Sigmoid colon (tissue), 7 donors: ENCODE measurements at regions of chr15 and their contacts with region 1.

Region 1: GRCh38 chr15:98647774-98648653 is at the start of gene IGF1R:
- DNase-seq: peak; percentile 93
- H3K4me3 ChIP-seq: peak within 1 kb of the TSS; percentile 63 to 94 (median 85)
- H3K27ac ChIP-seq: peak within 1 kb of the TSS; percentile 92 to 98 (median 96)
- H3K4me1 ChIP-seq: peaks cover 0 to 21% (median 14%) of the 10 kb centered on the region in 4 donors
- H3K27me3 ChIP-seq: no peaks in the 10 kb centered on the region
- CTCF ChIP-seq: peak in 1 of 4 experiments; percentile 24
- EP300 ChIP-seq: no peak
- POLR2A ChIP-seq: no peak
- total RNA-seq, gene IGF1R: 39.6 to 130 (median 61.3) TPM

Region 2: GRCh38 chr15:98442379-98442833 is 205.6 kb before region 1 on chr15:
- intact Hi-C with region 1: loop called (anchors 5 kb)
- DNase-seq: no peak
- H3K4me3 ChIP-seq: no peak overlapping the region
- H3K27ac ChIP-seq: no peak overlapping the region
- H3K4me1 ChIP-seq: peaks cover 0 to 5% (median 0%) of the 10 kb centered on the region in 4 donors
- H3K27me3 ChIP-seq: no peaks in the 10 kb centered on the region
- CTCF ChIP-seq: peak; percentile 55 to 83 (median 77)
- EP300 ChIP-seq: no peak
- POLR2A ChIP-seq: no peak

Region 3: GRCh38 chr15:98599909-98600691 is 47.9 kb before region 1 on chr15:
- intact Hi-C with region 1: loop called (anchors 5 kb)
- DNase-seq: no peak
- H3K4me3 ChIP-seq: peak overlapping the region; percentile 30 to 50 (median 46)
- H3K27ac ChIP-seq: peak overlapping the region; percentile 12 to 71 (median 70)
- H3K4me1 ChIP-seq: peaks cover 0 to 23% (median 17%) of the 10 kb centered on the region in 4 donors
- H3K27me3 ChIP-seq: no peaks in the 10 kb centered on the region
- CTCF ChIP-seq: no peak
- EP300 ChIP-seq: no peak
- POLR2A ChIP-seq: no peak

Region 4: GRCh38 chr15:98779463-98780071 is 131.6 kb after region 1 on chr15:
- intact Hi-C with region 1: loop called (anchors 5 kb)
- DNase-seq: peak; percentile 86
- H3K4me3 ChIP-seq: no peak overlapping the region
- H3K27ac ChIP-seq: peak overlapping the region in 3 of 4 donors; percentile 16 to 58 (median 44)
- H3K4me1 ChIP-seq: peaks cover 0 to 47% (median 39%) of the 10 kb centered on the region in 4 donors
- H3K27me3 ChIP-seq: no peaks in the 10 kb centered on the region
- CTCF ChIP-seq: peak; percentile 49 to 90 (median 88)
- EP300 ChIP-seq: no peak
- POLR2A ChIP-seq: no peak

Region 5: GRCh38 chr15:99059010-99059981 is 411.3 kb after region 1 on chr15:
- intact Hi-C with region 1: loop called (anchors 2 kb)
- DNase-seq: peak; percentile 96
- H3K4me3 ChIP-seq: peak overlapping the region; percentile 28 to 65 (median 57)
- H3K27ac ChIP-seq: peak overlapping the region; percentile 91 to 97 (median 94)
- H3K4me1 ChIP-seq: peaks cover 0 to 21% (median 18%) of the 10 kb centered on the region in 4 donors
- H3K27me3 ChIP-seq: no peaks in the 10 kb centered on the region
- CTCF ChIP-seq: peak in 3 of 4 experiments; percentile 10 to 76 (median 26)
- EP300 ChIP-seq: peak in 1 of 4 donors; percentile 62
- POLR2A ChIP-seq: no peak

Region 6: GRCh38 chr15:99592145-99592791 is 944.3 kb after region 1 on chr15:
- intact Hi-C with region 1: no loop called
- DNase-seq: no peak
- H3K4me3 ChIP-seq: no peak overlapping the region
- H3K27ac ChIP-seq: peak overlapping the region in 1 of 4 donors; percentile 4
- H3K4me1 ChIP-seq: peaks cover 0 to 63% (median 33%) of the 10 kb centered on the region in 4 donors
- H3K27me3 ChIP-seq: no peaks in the 10 kb centered on the region
- CTCF ChIP-seq: no peak
- EP300 ChIP-seq: no peak
- POLR2A ChIP-seq: no peak